ENCODE measurements at regions of chr9 and their contacts with region 1.

Region 1: DNA sequence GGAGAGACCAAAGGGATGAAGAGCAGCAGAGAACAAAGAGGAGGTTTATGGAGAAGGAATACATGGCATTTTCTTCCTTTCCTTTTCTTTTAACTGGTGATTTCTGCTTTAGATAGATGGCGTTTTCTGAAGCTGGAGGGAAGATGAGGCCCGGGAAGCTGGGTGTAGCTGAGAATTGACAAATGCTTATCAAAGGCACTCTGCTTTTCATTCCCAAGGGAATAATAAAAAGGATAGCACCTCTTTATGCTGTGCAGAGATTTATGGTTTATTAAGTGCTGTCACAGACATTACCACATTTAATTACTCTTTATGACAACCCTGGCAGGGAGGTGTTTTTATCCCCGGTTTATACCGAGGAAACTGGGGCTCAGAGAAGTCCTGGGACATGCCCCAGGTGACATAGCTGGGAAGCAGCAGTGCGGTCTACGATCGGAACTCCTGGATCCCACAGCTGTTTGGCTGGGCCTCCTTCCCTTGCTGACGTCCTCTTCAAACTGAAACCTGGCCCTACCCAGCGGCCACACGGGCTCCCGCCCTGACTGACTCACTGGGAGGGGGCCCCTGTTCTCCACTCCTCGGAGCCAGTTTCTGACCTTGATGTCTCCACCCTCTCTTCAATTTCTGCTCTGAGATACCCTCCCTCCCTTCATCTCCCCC is 8.2 kb upstream of the EPB41L4B start:
- DNase-seq: no peak
- ATAC-seq: peak; percentile 78
- H3K4me3 ChIP-seq: no peak overlapping the region
- H3K27ac ChIP-seq: no peak overlapping the region
- H3K4me1 ChIP-seq: no peaks in the 10 kb centered on the region
- H3K27me3 ChIP-seq: no peaks in the 10 kb centered on the region
- CTCF ChIP-seq: no peak

Region 2: GRCh38 chr9:109344866-109345265 is 15.8 kb after region 1 on chr9:
- CTCF ChIA-PET with region 1: no interaction called
- POLR2A ChIA-PET with region 1: interaction called, 14 read pairs
- in situ Hi-C with region 1: no loop called
- intact Hi-C with region 1: no loop called
- DNase-seq: no peak
- ATAC-seq: no peak
- H3K4me3 ChIP-seq: no peak overlapping the region
- H3K27ac ChIP-seq: no peak overlapping the region
- H3K4me1 ChIP-seq: no peaks in the 10 kb centered on the region; the same call in 1 of the 2 replicates
- H3K27me3 ChIP-seq: no peaks in the 10 kb centered on the region
- CTCF ChIP-seq: no peak